ENCODE measurements at regions of chr17 and their contacts with region 1.

Region 1: GRCh38 chr17:6069539-6070429 is at the start of gene WSCD1:
- DNase-seq: peak; percentile 21 to 57
- ATAC-seq: peak; percentile 41 to 72
- H3K4me3 ChIP-seq: peak within 1 kb of the TSS; percentile 66
- H3K27ac ChIP-seq: peak within 1 kb of the TSS; percentile 65 to 85
- H3K4me1 ChIP-seq: peaks cover 15% of the 10 kb centered on the region; the same call in 2 of the 3 replicates
- CTCF ChIP-seq: no peak
- EP300 ChIP-seq: no peak
- POLR2A ChIP-seq: no peak
- RAD21 ChIP-seq: no peak
- polyA plus RNA-seq, gene WSCD1: 1.6 and 1.9 TPM in 2 replicates

Region 2: GRCh38 chr17:6028294-6028693 is 41.5 kb before region 1 on chr17:
- CTCF ChIA-PET with region 1: no interaction called
- POLR2A ChIA-PET with region 1: no interaction called
- DNase-seq: no peak
- ATAC-seq: no peak
- H3K4me3 ChIP-seq: no peak overlapping the region
- H3K27ac ChIP-seq: no peak overlapping the region
- H3K4me1 ChIP-seq: no peaks in the 10 kb centered on the region
- CTCF ChIP-seq: no peak
- EP300 ChIP-seq: no peak
- POLR2A ChIP-seq: no peak
- RAD21 ChIP-seq: no peak

Region 3: DNA sequence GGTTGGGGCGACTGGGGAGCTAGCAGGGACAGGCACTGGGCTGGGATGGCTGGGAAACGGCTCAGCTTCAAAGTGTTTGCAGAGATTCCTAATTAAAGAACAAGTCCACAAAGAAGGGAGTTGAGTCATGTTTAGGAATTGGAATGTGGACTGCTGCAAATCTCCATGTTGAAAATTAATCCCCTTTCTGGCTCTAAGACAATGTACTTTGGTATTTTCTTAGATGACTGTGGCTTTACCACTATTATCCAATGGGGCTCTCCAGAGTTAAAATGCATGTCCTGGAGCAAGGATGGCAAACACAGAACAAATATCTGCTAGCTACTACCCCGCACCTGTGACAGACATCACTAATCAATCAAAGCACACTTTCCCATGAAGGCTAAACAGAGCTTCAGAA is 21.8 kb before region 1 on chr17:
- CTCF ChIA-PET with region 1: interaction called, 10 read pairs
- POLR2A ChIA-PET with region 1: no interaction called
- DNase-seq: no peak
- ATAC-seq: no peak
- H3K4me3 ChIP-seq: no peak overlapping the region
- H3K27ac ChIP-seq: no peak overlapping the region
- H3K4me1 ChIP-seq: no peaks in the 10 kb centered on the region
- CTCF ChIP-seq: no peak
- EP300 ChIP-seq: no peak
- POLR2A ChIP-seq: no peak
- RAD21 ChIP-seq: no peak

Region 4: GRCh38 chr17:6059406-6059805 is 10.4 kb before region 1 on chr17:
- CTCF ChIA-PET with region 1: interaction called, 20 read pairs
- POLR2A ChIA-PET with region 1: no interaction called
- DNase-seq: no peak
- ATAC-seq: no peak
- H3K4me3 ChIP-seq: no peak overlapping the region
- H3K27ac ChIP-seq: no peak overlapping the region
- H3K4me1 ChIP-seq: peaks cover 11% of the 10 kb centered on the region; the same call in 2 of the 3 replicates
- CTCF ChIP-seq: no peak
- EP300 ChIP-seq: no peak
- POLR2A ChIP-seq: no peak
- RAD21 ChIP-seq: no peak

Measured in A549 (cell line).